Activated B cell treated with CpG ODN at 0.5 μM for 24 hours (primary cell): ENCODE measurements at regions of chr1 and their contacts with region 1.

Region 1: DNA sequence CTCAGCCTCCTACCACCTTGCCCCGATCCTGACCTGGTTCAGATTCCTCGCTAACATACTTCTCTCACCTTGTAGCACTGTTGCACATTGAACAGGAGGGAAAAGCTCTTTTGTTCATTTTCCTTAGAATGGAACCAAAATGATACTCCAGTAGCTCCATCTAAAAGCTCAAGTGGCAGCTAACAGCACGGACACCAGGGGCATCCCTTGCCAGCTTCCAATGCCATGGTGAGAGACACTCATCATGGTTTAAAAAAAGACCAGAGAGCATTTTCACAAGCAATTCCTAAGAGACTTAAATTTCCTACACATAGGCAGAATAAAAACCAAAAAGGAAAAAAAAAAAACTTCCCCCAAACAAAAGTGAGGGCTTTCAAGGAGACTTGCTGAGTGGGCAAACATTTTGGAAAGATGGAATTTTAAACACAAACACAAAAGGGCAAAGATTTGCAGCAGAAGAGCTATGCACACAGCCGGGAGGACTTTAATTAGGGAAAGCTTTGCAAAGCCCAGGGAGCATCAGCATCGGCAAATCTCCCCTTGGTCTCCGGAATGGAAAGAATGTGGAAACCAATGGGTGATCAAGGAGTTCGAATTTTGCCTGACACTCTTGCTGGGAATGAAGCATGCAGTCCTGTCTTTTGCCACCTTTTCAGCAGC is 84.3 kb downstream of the CAPZB start:
- DNase-seq: no peak
- ATAC-seq: no peak
- H3K4me3 Mint-ChIP-seq: no peak overlapping the region
- H3K27ac Mint-ChIP-seq: no peak overlapping the region
- H3K4me1 Mint-ChIP-seq: peaks cover 35% of the 10 kb centered on the region
- H3K27me3 Mint-ChIP-seq: no peaks in the 10 kb centered on the region
- CTCF ChIP-seq: no peak

Region 2: GRCh38 chr1:19123837-19124236 is 277.2 kb before region 1 on chr1:
- CTCF ChIA-PET with region 1: no interaction called
- POLR2A ChIA-PET with region 1: no interaction called
- intact Hi-C with region 1: no loop called
- DNase-seq: no peak
- ATAC-seq: no peak
- H3K4me3 Mint-ChIP-seq: no peak overlapping the region
- H3K27ac Mint-ChIP-seq: no peak overlapping the region
- H3K4me1 Mint-ChIP-seq: peaks cover 8% of the 10 kb centered on the region
- H3K27me3 Mint-ChIP-seq: no peaks in the 10 kb centered on the region
- CTCF ChIP-seq: no peak

Region 3: GRCh38 chr1:19287436-19288185 is 113.4 kb before region 1 on chr1:
- CTCF ChIA-PET with region 1: no interaction called
- POLR2A ChIA-PET with region 1: no interaction called
- intact Hi-C with region 1: no loop called
- DNase-seq: no peak
- ATAC-seq: no peak
- H3K4me3 Mint-ChIP-seq: peak overlapping the region; percentile 75
- H3K27ac Mint-ChIP-seq: no peak overlapping the region
- H3K4me1 Mint-ChIP-seq: peaks cover 9% of the 10 kb centered on the region
- H3K27me3 Mint-ChIP-seq: peaks cover 15% of the 10 kb centered on the region
- CTCF ChIP-seq: no peak

Region 4: DNA sequence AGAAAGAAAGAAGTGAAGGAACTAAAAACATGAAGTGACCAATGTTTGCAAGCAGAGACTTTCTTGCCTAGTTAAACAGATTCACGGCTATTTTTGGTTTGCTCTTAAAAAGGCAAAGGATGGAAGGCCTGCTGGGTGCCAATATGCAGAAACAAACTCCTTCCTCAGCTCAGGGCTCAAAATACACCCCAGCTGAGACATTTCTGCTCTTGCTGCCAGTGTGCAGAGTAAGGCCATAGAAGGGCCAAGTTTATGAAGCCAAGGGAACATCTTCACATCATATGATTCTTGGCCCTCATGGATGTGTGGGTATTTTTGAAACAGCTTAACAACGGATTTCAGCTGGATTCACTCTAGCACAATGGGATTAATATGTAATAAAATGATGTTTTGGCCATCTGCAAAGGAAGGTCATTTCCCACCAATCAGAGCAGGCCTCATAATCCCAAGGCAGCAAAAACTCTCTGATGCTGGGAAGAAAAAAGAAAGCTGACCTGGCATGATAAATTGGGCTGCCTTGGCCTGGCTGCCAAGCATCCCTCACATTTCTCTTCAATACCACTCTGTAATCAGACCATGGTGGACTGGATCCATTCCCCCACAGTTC is 13.6 kb after region 1 on chr1:
- CTCF ChIA-PET with region 1: no interaction called
- POLR2A ChIA-PET with region 1: interaction called, 3 read pairs
- intact Hi-C with region 1: loop called (anchors 1 kb)
- DNase-seq: no peak
- ATAC-seq: no peak
- H3K4me3 Mint-ChIP-seq: no peak overlapping the region
- H3K27ac Mint-ChIP-seq: no peak overlapping the region
- H3K4me1 Mint-ChIP-seq: peaks cover 52% of the 10 kb centered on the region
- H3K27me3 Mint-ChIP-seq: no peaks in the 10 kb centered on the region
- CTCF ChIP-seq: no peak

Region 5: DNA sequence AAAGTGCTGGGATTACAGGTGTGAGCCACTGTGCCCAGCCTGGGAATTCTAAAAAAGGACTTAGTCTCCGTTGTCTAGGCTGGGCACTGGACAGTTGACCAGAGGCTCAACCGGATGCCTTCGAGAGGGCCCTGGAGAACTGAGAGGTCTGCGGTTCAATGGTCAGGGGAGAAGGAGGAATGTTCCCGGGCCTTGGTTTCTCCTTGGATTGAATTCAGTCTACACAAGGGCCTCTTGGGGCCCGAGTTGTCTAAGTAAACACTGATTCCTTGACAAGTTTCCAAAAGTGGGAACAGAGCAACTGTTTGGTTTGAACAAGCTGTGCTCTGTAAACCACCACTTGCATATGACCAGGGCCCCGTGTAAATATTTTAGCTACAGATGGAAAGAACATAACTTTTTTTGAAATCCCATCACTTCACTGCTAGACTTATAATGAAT is 113.4 kb after region 1 on chr1:
- CTCF ChIA-PET with region 1: no interaction called
- POLR2A ChIA-PET with region 1: no interaction called
- intact Hi-C with region 1: no loop called
- DNase-seq: no peak
- ATAC-seq: no peak
- H3K4me3 Mint-ChIP-seq: no peak overlapping the region
- H3K27ac Mint-ChIP-seq: no peak overlapping the region
- H3K4me1 Mint-ChIP-seq: peaks cover 55% of the 10 kb centered on the region
- H3K27me3 Mint-ChIP-seq: no peaks in the 10 kb centered on the region
- CTCF ChIP-seq: no peak